Endothelial cell of umbilical vein (primary cell): ENCODE measurements at regions of chr19 and their contacts with region 1.

Region 1: DNA sequence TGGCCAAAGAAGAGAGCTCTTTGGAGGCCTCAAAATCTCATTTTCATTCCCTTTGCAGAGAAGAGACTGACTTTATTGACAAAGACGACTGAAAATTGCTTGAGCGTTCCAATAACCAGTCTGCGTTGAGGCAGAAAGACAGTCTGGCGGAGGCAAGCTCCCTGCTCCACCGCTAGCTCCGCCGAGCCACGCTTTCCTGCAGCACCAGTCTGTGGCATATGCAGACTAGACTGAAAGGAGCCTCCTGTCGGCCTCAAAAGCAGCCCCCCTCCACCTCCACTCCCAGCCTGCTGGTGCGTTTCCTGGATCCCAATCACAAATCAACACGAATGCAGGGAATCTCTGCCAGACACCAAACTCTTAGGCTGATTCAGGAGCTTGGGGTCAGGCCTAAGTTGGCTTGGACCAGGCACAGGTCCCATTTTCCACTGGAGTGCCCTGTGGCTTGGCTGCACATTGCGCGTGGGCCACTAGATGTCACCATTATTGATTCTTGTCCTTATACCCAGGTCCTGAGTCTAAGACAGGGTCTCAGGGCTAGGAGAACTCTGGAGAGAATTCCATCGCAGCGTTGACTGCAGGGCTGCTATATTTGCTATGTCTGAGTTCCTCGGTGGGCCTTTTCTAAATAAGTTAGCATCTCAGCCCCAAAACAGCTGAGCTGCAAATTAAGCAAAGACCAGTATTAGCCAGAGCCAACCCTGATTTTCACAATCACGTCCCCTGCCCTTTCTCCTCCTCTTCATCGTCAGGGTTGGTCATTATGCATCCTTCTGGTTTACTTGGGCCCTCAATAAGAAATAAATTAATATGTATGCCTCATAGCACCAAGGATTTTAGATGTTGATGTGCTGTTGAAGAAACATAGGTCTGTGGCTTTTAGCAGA is 5.2 kb upstream of the ZNF507 start:
- DNase-seq: peak; percentile 61
- H3K4me3 ChIP-seq: no peak overlapping the region
- H3K27ac ChIP-seq: no peak overlapping the region
- H3K4me1 ChIP-seq: no peaks in the 10 kb centered on the region
- H3K27me3 ChIP-seq: peaks cover 0 to 2% of the 10 kb centered on the region in 2 experiments
- CTCF ChIP-seq: peak; percentile 66 to 70
- POLR2A ChIP-seq: no peak

Region 2: DNA sequence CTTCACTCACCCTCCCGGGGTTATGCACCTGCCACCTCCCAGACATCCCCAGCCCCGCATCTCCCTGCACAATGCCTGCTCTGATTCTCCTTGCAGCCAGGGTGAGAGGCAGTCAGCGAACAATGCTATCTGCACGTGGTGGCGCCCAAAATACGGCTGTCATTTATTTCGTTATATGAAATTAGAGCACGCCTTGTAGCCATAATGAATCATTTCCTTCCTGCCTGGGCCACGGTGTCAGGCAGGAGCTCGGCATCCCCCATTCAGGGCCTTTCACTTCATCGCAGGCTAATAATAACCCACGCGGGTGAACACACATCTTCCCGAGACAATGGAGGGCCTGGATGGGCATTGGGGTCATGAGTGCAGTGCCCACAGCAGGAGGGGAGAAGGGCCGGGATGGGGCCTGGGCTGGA is 138.6 kb before region 1 on chr19:
- CTCF ChIA-PET with region 1: no interaction called
- POLR2A ChIA-PET with region 1: no interaction called
- dilution Hi-C with region 1: no loop called
- intact Hi-C with region 1: loop called (anchors 1 kb)
- DNase-seq: peak; percentile 61
- H3K4me3 ChIP-seq: no peak overlapping the region
- H3K27ac ChIP-seq: no peak overlapping the region
- H3K4me1 ChIP-seq: peaks cover 6% of the 10 kb centered on the region
- H3K27me3 ChIP-seq: no peaks in the 10 kb centered on the region
- CTCF ChIP-seq: no peak
- POLR2A ChIP-seq: no peak

Region 3: DNA sequence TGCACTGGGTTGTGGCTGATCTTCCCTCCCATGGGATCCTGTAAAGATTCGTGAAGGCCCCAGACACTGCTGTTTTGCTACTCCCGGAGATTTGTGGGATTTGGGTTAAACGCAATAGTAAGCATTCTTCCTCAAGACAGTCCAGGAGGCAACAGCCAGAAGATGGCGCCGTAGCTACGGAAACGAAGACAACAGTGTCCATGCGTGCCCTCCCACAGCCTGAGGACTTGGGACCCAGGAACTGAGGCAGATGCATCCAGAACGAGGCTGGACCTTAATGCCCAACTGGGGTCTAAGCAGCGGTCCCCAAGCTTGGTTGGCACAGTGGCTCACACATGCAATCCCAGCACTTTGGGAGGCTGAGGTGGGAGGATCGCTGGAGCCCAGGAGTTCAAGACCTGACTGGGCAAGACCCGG is 52.4 kb before region 1 on chr19:
- CTCF ChIA-PET with region 1: no interaction called
- POLR2A ChIA-PET with region 1: no interaction called
- dilution Hi-C with region 1: no loop called
- intact Hi-C with region 1: no loop called
- DNase-seq: peak; percentile 43
- H3K4me3 ChIP-seq: no peak overlapping the region
- H3K27ac ChIP-seq: no peak overlapping the region
- H3K4me1 ChIP-seq: no peaks in the 10 kb centered on the region
- H3K27me3 ChIP-seq: peaks cover 0 to 2% of the 10 kb centered on the region in 2 experiments
- CTCF ChIP-seq: peak; percentile 18 to 52
- POLR2A ChIP-seq: no peak